Activated CD4-positive, alpha-beta T cell treated with anti-CD3 and anti-CD28 coated beads, Interleukin-2, amount 10 ng/mL, durations not matched to agents 24 days and 14 days (primary cell): ENCODE measurements at regions of chr12 and their contacts with region 1.

Region 1: DNA sequence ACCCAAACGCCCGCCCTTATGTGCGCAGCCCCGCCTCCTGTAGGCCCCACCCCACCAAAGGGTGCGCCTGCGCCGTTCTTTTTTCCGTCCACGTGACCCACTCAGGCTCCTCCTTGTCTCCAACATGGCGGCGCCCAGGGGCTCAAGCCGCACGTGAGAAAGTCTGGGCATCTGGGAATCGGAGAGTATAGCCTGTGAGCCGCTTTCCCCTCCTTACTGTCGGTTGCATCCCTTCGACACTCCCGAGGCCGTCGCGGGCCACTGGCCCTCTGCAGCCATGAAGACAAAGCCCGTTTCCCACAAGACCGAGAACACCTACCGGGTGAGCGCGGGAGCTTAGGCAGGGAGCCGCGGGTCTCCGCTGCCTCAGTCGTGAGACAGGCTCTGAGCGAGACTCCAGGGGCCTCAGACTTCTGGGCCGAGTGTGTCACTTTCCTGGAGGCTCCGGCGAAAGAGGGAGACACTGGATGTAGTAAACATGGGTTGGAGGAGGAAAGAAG is at the start of gene UTP20:
- DNase-seq: peak; percentile 98
- H3K4me3 Mint-ChIP-seq: peak within 1 kb of the TSS; percentile 94
- H3K27ac Mint-ChIP-seq: peak within 1 kb of the TSS; percentile 86
- H3K4me1 Mint-ChIP-seq: peaks cover 9% of the 10 kb centered on the region
- H3K27me3 Mint-ChIP-seq: peaks cover 23% of the 10 kb centered on the region
- total RNA-seq, gene UTP20: 46.4 and 47.4 TPM in 2 replicates

Region 2: GRCh38 chr12:100987552-100988521 is 292.2 kb before region 1 on chr12:
- intact Hi-C with region 1: no loop called
- DNase-seq: no peak
- H3K4me3 Mint-ChIP-seq: no peak overlapping the region
- H3K27ac Mint-ChIP-seq: no peak overlapping the region
- H3K4me1 Mint-ChIP-seq: peaks cover 6% of the 10 kb centered on the region
- H3K27me3 Mint-ChIP-seq: no peaks in the 10 kb centered on the region

Region 3: DNA sequence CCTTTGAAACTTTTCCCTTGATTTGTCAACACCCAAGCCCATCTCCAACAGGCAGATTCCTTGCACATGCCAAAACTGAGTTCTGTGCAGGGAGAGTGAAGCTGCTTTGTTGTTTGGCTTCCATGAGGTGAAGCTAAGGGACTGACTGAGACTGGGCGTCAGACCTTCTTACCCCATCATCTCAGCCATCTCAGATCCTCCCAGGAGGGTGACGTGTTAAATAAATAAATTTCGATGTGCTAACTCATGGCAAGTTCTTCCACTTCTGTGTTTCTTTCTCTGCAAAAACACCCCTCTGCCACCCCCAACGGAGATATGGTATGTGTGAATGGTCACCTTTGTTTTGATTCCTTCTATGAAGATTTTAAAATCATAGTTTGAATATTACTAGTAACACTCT is 17.6 kb after region 1 on chr12:
- intact Hi-C with region 1: loop called (anchors 2 kb)
- DNase-seq: no peak
- H3K4me3 Mint-ChIP-seq: no peak overlapping the region
- H3K27ac Mint-ChIP-seq: no peak overlapping the region
- H3K4me1 Mint-ChIP-seq: no peaks in the 10 kb centered on the region
- H3K27me3 Mint-ChIP-seq: no peaks in the 10 kb centered on the region

Region 4: GRCh38 chr12:101407436-101408345 is 127.6 kb after region 1 on chr12 and contains the start of gene ARL1:
- intact Hi-C with region 1: loop called (anchors 5 kb)
- DNase-seq: peak; percentile 93
- H3K4me3 Mint-ChIP-seq: peak within 1 kb of the TSS; percentile 100
- H3K27ac Mint-ChIP-seq: peak within 1 kb of the TSS; percentile 100
- H3K4me1 Mint-ChIP-seq: peaks cover 22% of the 10 kb centered on the region
- H3K27me3 Mint-ChIP-seq: peaks cover 10% of the 10 kb centered on the region
- total RNA-seq, gene ARL1: 77.6 and 85.4 TPM in 2 replicates

Region 5: DNA sequence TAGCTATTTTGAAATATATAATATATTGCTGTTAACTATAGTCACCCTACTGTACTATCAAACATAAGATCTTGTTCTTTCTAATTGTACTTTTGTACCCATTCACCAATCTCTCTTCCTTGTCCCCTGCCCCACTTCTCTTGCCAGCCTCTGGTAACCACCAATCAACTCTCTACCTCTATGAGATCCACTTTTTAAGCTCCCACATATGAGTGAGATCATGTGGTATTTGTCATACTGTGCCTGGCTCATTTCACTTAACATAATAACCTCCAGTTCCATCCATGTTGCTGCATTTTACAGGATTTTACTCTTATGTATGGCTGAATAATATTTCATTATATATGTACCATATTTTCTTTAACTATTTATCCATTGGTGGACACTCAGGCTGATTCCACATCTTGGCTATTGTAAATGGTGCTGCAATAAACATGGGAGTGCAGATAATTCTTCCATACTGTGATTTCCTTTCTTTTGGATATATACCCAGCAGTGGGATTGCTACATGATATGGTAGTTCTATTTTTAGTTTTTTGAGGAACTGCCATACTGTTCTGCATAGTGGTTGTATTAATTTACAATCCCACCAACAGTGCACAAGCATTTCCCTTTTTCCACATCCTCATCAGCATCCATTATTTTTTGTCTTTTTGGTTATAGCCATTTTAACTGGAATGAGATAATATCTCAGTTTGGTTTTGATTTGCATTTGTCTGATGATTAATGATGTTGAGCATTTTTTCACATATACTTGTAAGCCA is 161.6 kb after region 1 on chr12:
- intact Hi-C with region 1: no loop called
- DNase-seq: no peak
- H3K4me3 Mint-ChIP-seq: no peak overlapping the region
- H3K27ac Mint-ChIP-seq: no peak overlapping the region
- H3K4me1 Mint-ChIP-seq: no peaks in the 10 kb centered on the region
- H3K27me3 Mint-ChIP-seq: peaks cover 4% of the 10 kb centered on the region

Region 6: DNA sequence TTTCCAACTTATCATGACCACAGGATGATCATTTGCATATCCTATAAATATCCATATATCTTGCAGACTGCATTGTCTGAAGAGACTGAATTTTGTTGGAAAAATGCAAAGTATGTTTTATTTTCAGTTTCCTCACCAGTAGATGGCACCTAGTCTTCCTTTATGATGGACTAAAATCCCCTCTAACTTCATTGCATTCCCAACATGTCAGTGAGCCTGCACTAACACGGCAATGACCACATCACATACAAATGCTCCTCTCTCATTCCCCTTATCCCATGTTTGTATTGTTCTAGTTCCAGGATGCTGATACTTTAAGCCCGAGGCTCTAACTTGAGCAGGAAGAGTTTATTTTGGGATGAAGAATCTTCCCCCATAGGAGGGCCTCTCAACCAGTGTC is 290.0 kb after region 1 on chr12:
- intact Hi-C with region 1: no loop called
- DNase-seq: no peak
- H3K4me3 Mint-ChIP-seq: no peak overlapping the region
- H3K27ac Mint-ChIP-seq: no peak overlapping the region
- H3K4me1 Mint-ChIP-seq: peaks cover 4% of the 10 kb centered on the region
- H3K27me3 Mint-ChIP-seq: peaks cover 3% of the 10 kb centered on the region